Common myeloid progenitor, CD34-positive (primary cell): ENCODE measurements at regions of chr18 and their contacts with region 1.

Region 1: GRCh38 chr18:12287684-12288402 is 20.2 kb upstream of the TUBB6 start:
- DNase-seq: peak in 2 of 3 donors; percentile 21 to 44
- H3K4me3 ChIP-seq: peak overlapping the region in 6 of 7 experiments; percentile 29 to 69 (median 50)
- H3K27ac ChIP-seq: no peak overlapping the region
- H3K4me1 ChIP-seq: peaks cover 0 to 20% (median 14%) of the 10 kb centered on the region in 4 experiments
- H3K27me3 ChIP-seq: peaks cover 6 to 48% (median 23%) of the 10 kb centered on the region in 5 experiments

Region 2: DNA sequence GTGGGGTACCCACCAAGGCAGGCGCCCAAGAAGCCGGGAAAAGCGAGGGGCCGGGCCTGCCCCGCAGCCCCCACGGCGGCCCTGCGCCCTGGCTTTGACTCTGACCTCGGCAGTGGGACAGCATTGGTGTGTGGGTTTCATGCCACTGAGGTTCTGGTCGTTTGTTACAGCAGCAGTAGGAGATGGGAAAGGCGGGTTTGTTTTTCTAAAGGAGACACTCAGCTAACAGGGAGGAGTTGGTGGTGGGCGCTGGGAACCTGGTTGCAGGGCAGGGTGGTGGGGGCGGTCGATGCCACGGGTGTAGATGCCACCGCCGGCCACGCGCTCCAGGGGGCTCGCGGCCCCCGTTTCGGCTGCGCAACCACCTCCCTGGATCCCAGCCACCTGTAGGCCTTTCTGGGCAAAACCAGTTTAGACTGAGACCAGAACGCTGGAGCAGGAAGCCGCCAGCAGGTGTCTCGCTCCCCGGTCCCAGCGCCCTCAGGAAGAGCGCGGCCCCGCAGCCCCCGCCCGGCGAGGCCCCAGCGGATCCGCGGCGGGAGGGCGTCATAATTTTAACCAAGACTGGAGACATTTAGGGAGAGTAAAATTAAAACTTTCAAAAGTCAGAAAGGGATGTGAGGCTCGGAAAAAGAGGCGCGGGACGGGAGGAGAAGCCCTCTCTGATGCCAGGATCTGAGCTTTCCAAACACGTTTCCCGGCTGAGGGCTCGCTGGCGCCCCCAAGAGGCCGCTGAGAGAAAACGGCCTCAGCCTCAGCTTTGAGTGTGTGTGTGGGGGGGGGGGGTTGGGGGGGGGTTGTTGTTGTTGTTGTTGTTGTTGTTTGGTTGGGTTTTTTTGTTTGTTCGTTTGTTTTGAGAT is 16.2 kb before region 1 on chr18:
- CTCF ChIA-PET with region 1: interaction called, 15 read pairs
- POLR2A ChIA-PET with region 1: no interaction called
- DNase-seq: peak; percentile 78 to 82 (median 81)
- H3K4me3 ChIP-seq: peak overlapping the region; percentile 20 to 79 (median 68)
- H3K27ac ChIP-seq: no peak overlapping the region
- H3K4me1 ChIP-seq: peaks cover 0 to 6% (median 5%) of the 10 kb centered on the region in 4 experiments
- H3K27me3 ChIP-seq: peaks cover 0 to 3% (median 0%) of the 10 kb centered on the region in 5 experiments